OCI-LY7 (cell line): ENCODE measurements at regions of chr20 and their contacts with region 1.

Region 1: GRCh38 chr20:35387334-35387733 is 24.4 kb downstream of the UQCC1 start:
- DNase-seq: no peak
- H3K4me3 ChIP-seq: no peak overlapping the region
- H3K27ac ChIP-seq: no peak overlapping the region
- H3K4me1 ChIP-seq: no peaks in the 10 kb centered on the region
- CTCF ChIP-seq: no peak

Region 2: DNA sequence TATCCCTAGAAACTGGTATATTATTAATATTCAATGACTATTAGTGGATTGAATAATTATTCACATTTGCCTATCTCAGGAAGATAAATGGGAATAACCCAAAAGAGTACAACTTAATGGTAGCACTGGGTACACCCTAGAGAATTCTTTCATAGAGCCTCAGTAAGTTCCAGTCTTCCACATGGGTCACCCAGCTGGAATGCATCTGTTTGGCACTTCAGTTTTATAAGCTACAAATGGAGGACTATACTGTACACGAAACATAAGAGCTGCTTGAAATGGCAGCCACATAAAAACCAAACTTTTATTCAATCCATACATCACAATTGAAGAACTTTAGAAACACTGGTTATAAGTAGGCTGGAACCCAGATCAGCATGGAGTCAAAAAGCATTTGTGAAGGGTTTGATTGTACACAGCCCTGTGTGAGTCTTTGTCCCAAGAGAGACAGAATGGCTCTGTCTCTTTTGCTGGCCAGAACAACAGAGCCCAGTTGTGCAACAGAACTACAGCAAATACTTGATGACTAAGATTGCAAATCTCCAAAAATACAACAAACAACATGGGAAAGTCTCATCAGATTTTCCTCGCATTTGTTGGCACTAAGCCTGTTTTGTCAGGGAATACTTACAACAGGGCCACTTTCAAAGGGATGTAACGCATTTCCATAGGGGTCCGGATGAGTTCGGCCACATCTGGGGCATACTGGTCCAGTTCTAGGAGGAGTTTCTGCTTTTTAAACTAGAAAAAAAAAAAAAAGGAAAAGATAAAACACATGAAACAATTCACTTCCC is 749.9 kb before region 1 on chr20:
- CTCF ChIA-PET with region 1: no interaction called
- POLR2A ChIA-PET with region 1: no interaction called
- intact Hi-C with region 1: no loop called
- DNase-seq: no peak
- H3K4me3 ChIP-seq: no peak overlapping the region
- H3K27ac ChIP-seq: no peak overlapping the region
- H3K4me1 ChIP-seq: no peaks in the 10 kb centered on the region
- CTCF ChIP-seq: no peak

Region 3: GRCh38 chr20:35297155-35297554 is 90.2 kb before region 1 on chr20:
- CTCF ChIA-PET with region 1: no interaction called
- POLR2A ChIA-PET with region 1: no interaction called
- intact Hi-C with region 1: no loop called
- DNase-seq: no peak
- H3K4me3 ChIP-seq: no peak overlapping the region
- H3K27ac ChIP-seq: no peak overlapping the region
- H3K4me1 ChIP-seq: no peaks in the 10 kb centered on the region
- CTCF ChIP-seq: no peak

Region 4: DNA sequence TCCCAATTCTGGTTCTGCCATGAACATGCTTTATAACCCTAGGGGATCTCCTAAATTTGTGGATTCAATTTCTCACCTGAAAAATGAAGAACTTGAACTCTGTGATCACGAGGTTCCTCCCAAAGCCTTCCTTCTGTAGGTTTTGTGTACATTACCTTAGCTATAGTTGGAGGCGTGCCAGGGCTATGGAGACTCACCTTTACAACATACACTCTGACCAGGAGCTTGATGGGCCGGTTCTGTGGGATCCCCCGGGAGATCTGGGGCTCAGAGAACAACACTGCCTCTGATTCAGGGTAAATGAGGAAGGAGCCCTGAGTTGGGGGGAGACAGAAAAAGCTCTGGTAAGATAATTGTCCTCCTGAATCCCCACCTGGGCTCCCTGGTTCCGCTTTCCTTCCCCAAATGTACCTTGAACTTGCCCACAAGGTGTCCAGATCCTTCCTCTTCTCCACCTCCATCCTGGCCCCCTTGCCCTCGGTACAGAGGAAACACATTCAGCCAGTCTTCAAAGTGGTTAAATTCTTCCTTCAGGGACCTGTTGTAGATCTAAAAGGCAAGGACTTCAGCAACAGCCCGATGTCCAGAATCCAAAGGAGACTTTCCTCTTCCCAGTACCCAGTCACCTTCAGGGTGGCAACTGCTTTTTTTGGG is 188.8 kb after region 1 on chr20:
- CTCF ChIA-PET with region 1: no interaction called
- POLR2A ChIA-PET with region 1: interaction called, 15 read pairs
- intact Hi-C with region 1: no loop called
- DNase-seq: no peak
- H3K4me3 ChIP-seq: no peak overlapping the region
- H3K27ac ChIP-seq: no peak overlapping the region
- H3K4me1 ChIP-seq: no peaks in the 10 kb centered on the region
- CTCF ChIP-seq: no peak